B cell (primary cell): ENCODE measurements at regions of chrX and their contacts with region 1.

Region 1: DNA sequence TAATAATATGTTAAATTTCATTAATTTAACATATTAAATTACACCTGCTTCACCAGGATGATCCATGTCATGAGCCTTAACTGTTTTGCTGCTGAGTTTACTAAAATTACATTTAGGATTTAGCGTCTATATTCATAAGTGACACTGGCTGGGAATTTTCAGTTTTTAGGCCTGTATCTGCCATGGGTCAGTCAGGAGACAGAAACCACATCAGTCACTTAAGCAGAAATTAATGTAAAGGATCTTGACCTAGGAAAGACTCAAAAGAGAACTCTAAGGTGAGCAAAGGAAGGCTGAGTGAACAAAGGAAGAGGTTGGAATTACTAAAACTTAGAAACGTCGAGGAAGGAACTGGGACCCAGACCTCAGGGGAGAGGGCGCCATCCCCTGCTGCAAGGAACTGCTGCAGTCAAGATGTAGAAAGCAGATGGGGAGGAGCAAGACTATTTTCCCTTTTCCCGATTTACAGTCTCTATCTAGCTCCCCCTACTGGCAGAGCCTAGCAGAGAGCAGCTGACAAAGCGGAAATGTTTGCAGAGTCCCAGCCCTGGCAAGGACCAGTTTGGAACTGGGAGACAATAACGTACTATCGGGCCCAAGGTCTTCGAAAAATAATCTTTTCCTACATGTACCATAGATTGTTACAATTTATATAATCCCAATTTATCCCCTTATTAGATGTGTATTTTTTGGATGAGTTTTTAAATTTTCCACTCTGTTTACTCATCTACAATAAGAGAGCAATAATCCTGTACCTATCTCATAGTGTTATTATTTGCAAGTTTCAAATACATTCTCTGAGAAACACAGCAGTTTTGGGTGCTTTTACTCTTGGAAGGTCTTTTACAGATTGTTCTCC is 22.6 kb upstream of the RBBP7 start:
- DNase-seq: peak; percentile 76
- ATAC-seq: peak; percentile 84
- H3K4me3 ChIP-seq: no peak overlapping the region
- H3K4me3 Mint-ChIP-seq: peak overlapping the region; percentile 30
- H3K27ac ChIP-seq: no peak overlapping the region
- H3K27ac Mint-ChIP-seq: no peak overlapping the region
- H3K4me1 ChIP-seq: peaks cover 0 to 6% of the 10 kb centered on the region in 2 donors
- H3K4me1 Mint-ChIP-seq: peaks cover 7% of the 10 kb centered on the region
- H3K27me3 ChIP-seq: no peaks in the 10 kb centered on the region
- H3K27me3 Mint-ChIP-seq: no peaks in the 10 kb centered on the region
- CTCF ChIP-seq: peak; percentile 79

Region 2: DNA sequence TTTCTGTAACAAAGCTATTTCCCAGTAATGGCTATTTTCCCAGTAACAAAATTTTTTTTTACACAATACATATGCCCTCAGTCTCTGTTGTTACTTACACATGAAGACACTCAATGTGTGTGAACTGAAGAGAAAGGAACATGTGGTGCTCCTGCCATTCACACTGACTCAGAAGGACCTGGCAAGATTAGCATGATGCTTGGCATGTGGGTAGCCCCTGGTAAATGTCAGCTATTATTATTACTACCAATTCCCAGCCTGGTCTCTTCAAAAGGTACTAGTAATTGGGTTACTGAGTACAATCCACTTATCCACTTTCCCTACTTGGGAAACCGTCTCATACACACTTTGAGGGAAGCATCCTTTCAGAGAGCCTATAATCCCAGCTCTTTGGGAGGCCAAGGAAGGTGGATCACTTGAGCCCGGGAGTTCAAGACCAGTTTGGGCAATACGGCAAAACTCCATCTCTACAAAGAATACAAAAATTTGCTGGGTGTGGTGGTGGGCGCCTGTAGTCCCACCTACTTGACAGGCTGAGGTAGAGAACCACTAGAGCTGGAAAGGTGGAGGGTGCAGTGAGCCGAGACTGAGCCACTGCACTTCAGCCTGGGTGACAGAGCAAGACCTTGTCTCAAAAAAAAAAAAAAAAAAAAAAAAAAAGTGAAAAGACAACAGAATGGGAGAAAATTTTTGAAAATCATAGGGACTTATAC is 37.2 kb before region 1 on chrX:
- CTCF ChIA-PET with region 1: interaction called, 3 read pairs
- POLR2A ChIA-PET with region 1: no interaction called
- intact Hi-C with region 1: loop called (anchors 5 kb)
- DNase-seq: no peak
- ATAC-seq: no peak
- H3K4me3 ChIP-seq: no peak overlapping the region
- H3K4me3 Mint-ChIP-seq: no peak overlapping the region
- H3K27ac ChIP-seq: no peak overlapping the region
- H3K27ac Mint-ChIP-seq: no peak overlapping the region
- H3K4me1 ChIP-seq: no peaks in the 10 kb centered on the region
- H3K4me1 Mint-ChIP-seq: peaks cover 19% of the 10 kb centered on the region
- H3K27me3 ChIP-seq: no peaks in the 10 kb centered on the region
- H3K27me3 Mint-ChIP-seq: no peaks in the 10 kb centered on the region
- CTCF ChIP-seq: no peak